Tibial artery (tissue), 4 donors: ENCODE measurements at regions of chr9 and their contacts with region 1.

Region 1: DNA sequence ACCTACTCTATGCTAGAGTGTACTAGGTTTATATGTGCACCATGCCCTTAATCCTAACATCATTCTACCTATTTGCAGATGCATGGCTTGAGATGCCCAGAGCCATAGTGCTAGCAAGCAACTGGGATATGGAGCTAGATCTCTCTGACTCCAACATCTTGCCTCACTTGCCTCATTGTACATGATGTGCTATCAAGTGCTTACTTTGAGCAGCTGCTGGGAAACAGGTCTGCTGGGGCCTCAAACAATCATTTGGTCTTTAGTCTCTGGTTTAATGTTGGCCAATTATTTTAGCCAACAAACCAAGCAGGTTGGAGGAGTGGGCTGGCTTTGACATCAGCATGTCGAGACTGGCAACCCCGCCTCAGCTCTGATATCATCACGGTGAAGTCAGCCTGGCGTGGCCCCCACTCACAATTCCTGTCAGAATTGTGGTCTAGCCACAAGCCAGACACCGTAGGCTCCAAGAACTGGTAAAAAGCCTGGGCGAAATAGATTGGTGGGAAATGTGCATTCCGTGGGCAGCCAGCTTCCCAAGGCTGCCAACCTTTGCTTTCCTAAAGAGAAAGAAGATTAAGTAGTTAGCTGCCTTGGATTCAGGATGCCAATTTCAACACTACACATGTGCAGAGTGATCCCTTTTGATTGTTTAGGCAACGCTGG is 21.1 kb upstream of the GAS1 start:
- DNase-seq: no peak
- H3K4me3 ChIP-seq: no peak overlapping the region
- H3K27ac ChIP-seq: no peak overlapping the region
- H3K4me1 ChIP-seq: peaks cover 0 to 17% (median 0%) of the 10 kb centered on the region in 4 donors
- H3K27me3 ChIP-seq: no peaks in the 10 kb centered on the region
- CTCF ChIP-seq: no peak

Region 2: DNA sequence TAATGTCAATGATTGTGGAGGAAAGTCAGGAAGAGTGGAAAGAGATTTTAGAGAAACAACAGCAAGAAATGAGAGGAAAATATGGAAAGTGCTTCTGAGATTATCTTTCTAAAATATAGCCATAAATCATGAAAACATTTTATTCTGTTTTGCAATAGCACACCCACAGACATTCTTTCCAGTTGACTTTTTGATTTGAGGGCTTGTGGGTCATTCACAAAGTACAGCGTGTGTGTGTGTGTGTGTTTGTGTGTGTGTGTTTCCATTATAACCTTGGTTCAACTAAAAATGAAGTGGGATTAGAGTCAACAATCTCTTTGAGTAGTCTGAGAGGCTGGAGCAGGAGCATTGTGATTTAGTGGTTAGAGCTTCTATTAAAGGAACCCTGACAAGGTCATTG is 95.5 kb after region 1 on chr9:
- intact Hi-C with region 1: loop called (anchors 10 kb)
- DNase-seq: no peak
- H3K4me3 ChIP-seq: no peak overlapping the region
- H3K27ac ChIP-seq: peak overlapping the region; percentile 13 to 22
- H3K4me1 ChIP-seq: peaks cover 0 to 27% (median 10%) of the 10 kb centered on the region in 4 donors
- H3K27me3 ChIP-seq: no peaks in the 10 kb centered on the region
- CTCF ChIP-seq: no peak

Region 3: DNA sequence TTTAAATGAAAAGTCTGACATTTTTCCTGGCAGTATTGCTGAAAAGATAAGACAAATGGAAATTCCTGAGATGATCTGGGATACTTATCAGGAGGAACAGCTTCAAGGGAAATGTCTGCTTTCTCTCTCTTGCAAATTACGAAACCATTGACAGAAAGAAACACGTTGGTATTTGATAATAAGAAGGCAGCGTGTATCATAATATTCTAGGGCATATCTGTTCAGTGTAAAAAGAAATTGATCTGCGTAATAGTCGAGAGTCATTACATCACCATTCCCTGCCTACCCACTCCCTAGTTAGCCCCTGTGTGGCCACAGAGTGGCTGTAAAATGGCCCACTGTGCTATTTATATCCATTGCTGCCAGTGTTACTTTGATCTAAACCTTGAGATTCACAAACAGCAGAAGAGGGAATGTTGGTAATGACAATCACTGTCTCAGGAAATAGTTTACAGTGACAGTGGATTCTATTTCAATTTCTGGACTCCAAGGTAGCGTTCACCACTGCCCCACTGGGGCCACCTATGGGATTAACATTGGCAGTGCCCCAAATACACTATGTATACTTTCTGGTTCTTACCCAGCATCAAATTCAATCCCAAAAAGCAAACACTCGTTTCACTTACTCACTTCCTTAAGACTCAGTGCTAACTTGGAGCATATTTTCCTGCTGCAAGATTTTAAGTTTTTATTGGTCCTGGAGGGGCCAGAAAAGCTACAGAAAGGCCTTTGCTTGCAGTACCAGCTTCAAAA is 112.3 kb after region 1 on chr9:
- intact Hi-C with region 1: no loop called
- DNase-seq: no peak
- H3K4me3 ChIP-seq: no peak overlapping the region
- H3K27ac ChIP-seq: no peak overlapping the region
- H3K4me1 ChIP-seq: no peaks in the 10 kb centered on the region
- H3K27me3 ChIP-seq: no peaks in the 10 kb centered on the region
- CTCF ChIP-seq: no peak